IMR-90 (cell line): ENCODE measurements at regions of chr13 and their contacts with region 1.

Region 1: GRCh38 chr13:24851545-24851944 is 87.6 kb downstream of the RNF17 start:
- DNase-seq: peak; percentile 61
- ATAC-seq: peak; percentile 71
- H3K4me3 ChIP-seq: no peak overlapping the region
- H3K27ac ChIP-seq: peak overlapping the region; percentile 52; the same call in 1 of the 2 replicates
- H3K4me1 ChIP-seq: peaks cover 2% of the 10 kb centered on the region
- H3K27me3 ChIP-seq: no peaks in the 10 kb centered on the region
- CTCF ChIP-seq: no peak
- POLR2A ChIP-seq: no peak
- RAD21 ChIP-seq: no peak

Region 2: GRCh38 chr13:24922745-24923591 is 71.4 kb after region 1 on chr13:
- CTCF ChIA-PET with region 1: no interaction called
- POLR2A ChIA-PET with region 1: no interaction called
- dilution Hi-C with region 1: no loop called
- in situ Hi-C with region 1: no loop called
- intact Hi-C with region 1: loop called (anchors 2 kb)
- DNase-seq: peak; percentile 97
- ATAC-seq: peak; percentile 99
- H3K4me3 ChIP-seq: peak overlapping the region; percentile 84
- H3K27ac ChIP-seq: peak overlapping the region; percentile 99
- H3K4me1 ChIP-seq: peaks cover 2% of the 10 kb centered on the region; the same call in 1 of the 2 replicates
- H3K27me3 ChIP-seq: peaks cover 2% of the 10 kb centered on the region; the same call in 1 of the 2 replicates
- CTCF ChIP-seq: 0 out of 2 replicates have a peak, but pooled peaks have one; percentile 6
- POLR2A ChIP-seq: peak; percentile 94
- RAD21 ChIP-seq: no peak